KBM-7 (cell line): ENCODE measurements at regions of chr9 and their contacts with region 1.

Region 1: DNA sequence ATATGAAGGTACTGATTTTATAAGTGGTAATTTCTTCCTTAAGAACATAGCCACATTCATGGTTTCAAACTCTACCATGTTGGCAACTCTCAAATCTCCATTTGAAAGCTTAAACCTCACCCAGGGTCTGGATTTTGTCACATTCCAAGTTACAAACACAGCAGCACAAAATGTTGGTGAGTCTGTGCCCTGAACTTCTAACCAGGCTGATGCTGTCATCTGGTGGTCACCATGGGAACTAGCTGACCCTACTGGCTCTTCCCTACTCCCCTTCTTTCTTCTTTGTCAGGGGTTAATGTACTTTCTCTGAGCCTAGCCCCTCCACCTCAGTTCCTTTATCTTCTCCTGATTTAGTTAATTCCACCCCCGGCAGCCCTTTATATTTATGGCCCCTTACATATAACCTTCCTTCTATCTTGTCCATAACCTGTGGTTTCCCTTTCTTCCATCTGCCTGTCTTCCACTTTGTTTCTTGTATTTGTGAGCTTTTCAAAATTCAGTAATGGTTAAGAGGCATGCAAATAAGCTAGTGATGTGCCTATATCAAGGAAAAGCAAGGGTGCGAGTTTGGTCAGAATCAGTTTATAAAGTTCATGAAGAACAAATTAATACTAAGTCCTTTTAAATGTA is 35.9 kb downstream of the TGFBR1 start:
- DNase-seq: peak; percentile 68

Region 2: GRCh38 chr9:98660541-98660940 is 480.3 kb before region 1 on chr9:
- in situ Hi-C with region 1: no loop called
- DNase-seq: no peak

Region 3: GRCh38 chr9:98848450-98849149 is 292.2 kb before region 1 on chr9:
- in situ Hi-C with region 1: loop called (anchors 25 kb)
- DNase-seq: peak; percentile 81

Region 4: GRCh38 chr9:99762470-99762869 is 621.7 kb after region 1 on chr9:
- in situ Hi-C with region 1: no loop called
- DNase-seq: no peak